Calu3 (cell line): ENCODE measurements at regions of chr1 and their contacts with region 1.

Region 1: DNA sequence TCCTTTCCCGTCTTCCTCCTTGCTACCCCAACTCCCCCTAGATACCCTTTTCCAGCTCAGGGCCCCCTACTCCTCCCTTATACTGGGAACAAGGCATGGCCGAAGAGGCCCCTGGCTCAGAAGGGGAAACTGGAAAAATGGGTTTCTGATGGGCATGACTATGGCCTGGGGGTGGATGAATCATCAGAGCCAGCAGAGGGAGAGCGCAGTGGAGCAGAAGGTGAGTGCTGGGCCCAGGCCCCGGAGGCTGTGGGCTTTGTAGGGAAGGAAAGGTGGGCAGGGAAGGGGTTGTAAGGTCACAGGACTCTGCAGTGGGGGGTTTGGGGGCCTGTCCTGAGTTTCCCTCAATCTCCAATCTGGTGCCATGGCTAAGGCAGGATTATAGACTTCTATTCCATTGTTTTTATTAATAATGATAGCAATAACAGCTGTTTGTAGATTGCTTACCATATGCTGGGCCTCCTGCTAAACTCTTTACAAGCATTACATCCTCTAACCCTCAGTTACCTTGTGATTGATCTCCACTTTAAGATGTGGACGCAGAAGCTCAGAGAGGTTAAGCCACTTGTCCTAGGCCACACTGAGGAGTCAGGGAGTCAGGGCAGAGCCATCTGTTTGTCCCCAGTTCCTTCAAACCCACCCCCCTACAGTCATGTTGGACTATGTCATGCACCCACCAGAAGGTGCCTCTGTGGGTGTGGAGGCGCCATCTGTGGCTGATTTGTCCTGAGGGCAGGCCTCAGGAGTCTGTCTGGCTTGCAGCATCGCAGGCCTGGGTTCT is 36.2 kb upstream of the ZNF362 start:
- DNase-seq: peak; percentile 80
- H3K4me3 Mint-ChIP-seq: no peak overlapping the region
- H3K27ac Mint-ChIP-seq: peak overlapping the region; percentile 83
- H3K4me1 Mint-ChIP-seq: peaks cover 34% of the 10 kb centered on the region
- H3K27me3 Mint-ChIP-seq: no peaks in the 10 kb centered on the region
- CTCF ChIP-seq: no peak

Region 2: DNA sequence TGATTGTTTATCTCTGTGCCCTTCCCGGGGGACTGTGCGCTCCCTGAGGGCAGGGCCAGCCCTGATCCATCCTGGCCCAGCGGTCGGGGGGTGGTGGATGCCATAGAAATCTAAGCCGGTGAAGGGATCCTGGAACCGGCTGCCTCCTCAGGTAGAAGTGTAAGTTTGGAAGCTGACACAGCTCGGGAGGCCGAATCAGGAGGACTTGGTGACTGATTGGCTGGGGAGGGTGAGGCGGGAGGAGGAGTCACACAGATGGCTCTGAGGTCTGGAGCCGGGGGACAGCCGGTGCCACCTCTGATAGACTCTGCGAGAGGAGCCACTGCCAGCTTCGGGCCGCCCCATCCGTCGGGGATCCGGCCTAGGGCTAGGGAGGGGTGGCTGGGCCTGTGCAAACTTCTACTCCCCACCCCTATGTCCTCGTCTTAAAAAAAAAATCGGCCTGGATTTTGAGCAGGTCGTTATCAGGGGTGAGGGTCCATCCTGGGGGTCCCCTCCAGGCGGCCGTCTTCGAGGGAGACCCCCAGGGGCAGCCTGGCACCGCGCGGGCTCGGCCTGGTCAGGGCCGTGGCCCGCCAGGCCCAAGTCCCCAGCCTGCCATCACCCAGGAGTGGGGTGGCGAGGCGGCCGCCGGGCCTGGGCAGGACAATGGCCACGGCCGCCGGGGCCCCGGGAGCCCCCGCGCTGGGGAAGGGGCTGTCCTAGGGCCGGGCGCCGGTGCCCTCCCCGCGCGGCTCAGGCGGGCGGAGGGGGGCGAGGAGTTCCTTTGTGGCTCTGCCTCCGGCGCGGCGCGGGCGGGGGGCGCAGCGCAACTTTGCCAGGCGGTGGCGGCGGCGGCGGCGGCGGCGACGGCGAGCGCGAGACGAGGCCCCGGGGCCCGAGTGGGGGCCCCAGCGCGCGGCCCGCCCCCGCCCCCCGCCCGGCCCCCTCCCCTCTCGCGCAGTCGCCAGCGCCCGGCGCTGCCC is 35.6 kb after region 1 on chr1:
- CTCF ChIA-PET with region 1: interaction called, 3 read pairs
- intact Hi-C with region 1: loop called (anchors 2 kb)
- DNase-seq: peak; percentile 83
- H3K4me3 Mint-ChIP-seq: peak overlapping the region; percentile 87
- H3K27ac Mint-ChIP-seq: no peak overlapping the region
- H3K4me1 Mint-ChIP-seq: peaks cover 25% of the 10 kb centered on the region
- H3K27me3 Mint-ChIP-seq: peaks cover 15% of the 10 kb centered on the region
- CTCF ChIP-seq: no peak

Region 3: GRCh38 chr1:33367485-33368405 is 147.7 kb after region 1 on chr1:
- CTCF ChIA-PET with region 1: interaction called, 4 read pairs
- intact Hi-C with region 1: loop called (anchors 5 kb)
- DNase-seq: peak; percentile 90
- H3K4me3 Mint-ChIP-seq: peak overlapping the region; percentile 16
- H3K27ac Mint-ChIP-seq: no peak overlapping the region
- H3K4me1 Mint-ChIP-seq: no peaks in the 10 kb centered on the region
- H3K27me3 Mint-ChIP-seq: no peaks in the 10 kb centered on the region
- CTCF ChIP-seq: peak; percentile 91